ENCODE measurements at regions of chr12 and their contacts with region 1.

Region 1: GRCh38 chr12:123808167-123808566 is 46.1 kb downstream of the DNAH10 start:
- DNase-seq: no peak
- H3K4me3 ChIP-seq: peak overlapping the region in 2 of 59 donors; percentile 12 to 26
- H3K27ac ChIP-seq: peak overlapping the region in 10 of 59 donors; percentile 12 to 79 (median 62)
- H3K27me3 ChIP-seq: no peaks in the 10 kb centered on the region
- CTCF ChIP-seq: peak in 32 of 56 donors; percentile 9 to 47 (median 24)

Region 2: DNA sequence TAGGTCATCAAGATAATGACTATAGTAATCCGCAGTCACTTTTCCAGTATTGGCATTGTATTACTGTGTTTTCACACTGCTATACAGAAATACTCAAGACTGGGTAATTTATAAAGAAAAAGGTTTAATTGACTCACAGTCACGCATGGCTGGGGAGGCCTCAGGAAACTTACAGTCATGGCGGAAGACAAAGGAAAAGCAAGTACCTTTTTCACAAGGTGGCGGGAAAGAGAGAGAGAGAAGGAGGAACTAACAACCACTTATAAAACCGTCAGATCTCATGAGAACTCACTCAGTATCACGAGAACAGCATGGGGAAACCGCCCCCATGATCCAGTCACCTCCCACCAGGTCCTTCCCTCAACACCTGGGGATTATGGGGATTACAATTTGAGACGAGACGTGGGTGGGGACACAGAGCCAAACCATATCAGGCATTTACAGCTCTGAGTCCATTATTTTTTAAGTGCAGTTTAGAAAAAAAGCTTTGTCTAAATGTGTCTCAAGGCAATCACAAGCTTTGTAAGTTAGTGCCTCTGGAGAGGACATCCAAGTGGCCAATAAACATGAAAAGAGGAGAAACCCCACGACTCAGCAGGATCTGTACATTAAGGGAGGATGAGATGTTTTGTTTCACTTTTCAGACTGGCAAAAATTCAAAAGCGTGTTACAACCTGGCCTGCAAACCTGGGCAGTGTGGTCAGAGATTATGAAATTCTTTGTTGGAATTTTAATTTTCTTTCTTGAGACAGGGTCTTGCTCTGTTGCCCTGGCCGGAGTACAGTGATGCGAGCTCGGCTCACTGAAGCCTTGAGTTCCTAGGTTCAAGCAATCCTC is 36.0 kb after region 1 on chr12:
- intact Hi-C with region 1: loop called in 1 of 2 experiments (anchors 5 kb)
- DNase-seq: no peak
- H3K4me3 ChIP-seq: no peak overlapping the region
- H3K27ac ChIP-seq: no peak overlapping the region
- H3K27me3 ChIP-seq: no peaks in the 10 kb centered on the region
- CTCF ChIP-seq: no peak

Region 3: GRCh38 chr12:123897221-123897620 is 89.1 kb after region 1 on chr12:
- intact Hi-C with region 1: loop called in 1 of 2 experiments (anchors 5 kb)
- DNase-seq: no peak
- H3K4me3 ChIP-seq: no peak overlapping the region
- H3K27ac ChIP-seq: no peak overlapping the region
- H3K27me3 ChIP-seq: no peaks in the 10 kb centered on the region
- CTCF ChIP-seq: no peak